Calu3 (cell line): ENCODE measurements at regions of chr13 and their contacts with region 1.

Region 1: DNA sequence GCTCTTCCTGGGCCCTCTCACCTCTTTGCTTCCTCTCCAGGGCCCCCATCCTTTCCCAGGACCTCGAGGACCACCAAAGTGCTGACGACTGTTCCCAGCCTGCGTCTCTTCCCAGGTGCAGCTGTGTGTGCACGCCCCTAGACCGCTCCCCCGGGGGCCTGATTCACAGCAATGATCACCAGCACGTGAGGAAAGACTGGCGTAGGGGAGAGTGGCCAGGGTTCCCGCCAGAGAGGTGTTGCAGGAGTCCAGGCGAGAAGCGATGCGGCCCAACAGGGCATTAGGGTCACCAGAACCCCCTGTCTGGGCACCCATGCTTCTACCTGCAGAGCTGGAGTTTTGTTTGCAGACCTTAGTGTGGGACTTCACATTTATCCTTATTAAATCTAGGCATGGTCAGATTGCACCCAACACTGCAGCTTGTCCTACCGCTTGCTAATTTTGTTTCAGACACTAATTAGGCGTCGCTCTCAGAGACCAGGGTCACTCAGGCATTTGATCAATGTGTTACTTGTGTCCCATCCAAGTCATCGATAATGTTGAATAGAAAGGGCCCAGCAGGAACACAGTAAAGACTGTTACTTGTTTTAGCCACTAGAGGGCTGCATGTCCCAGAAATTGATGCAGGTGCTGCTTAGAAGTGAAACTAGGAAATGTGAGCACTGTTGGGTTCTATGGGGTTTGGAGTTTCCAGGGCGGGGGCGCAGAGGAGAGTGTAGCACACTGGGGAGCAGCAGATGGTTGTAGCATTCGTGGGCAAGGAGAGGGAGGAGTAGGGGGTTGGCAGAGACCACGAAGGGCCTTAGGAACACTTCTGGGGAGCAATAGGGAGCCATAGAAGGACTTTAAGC is 53.2 kb downstream of the CDADC1 start:
- DNase-seq: peak; percentile 41
- H3K4me3 Mint-ChIP-seq: no peak overlapping the region
- H3K27ac Mint-ChIP-seq: peak overlapping the region; percentile 64
- H3K4me1 Mint-ChIP-seq: peaks cover 43% of the 10 kb centered on the region
- H3K27me3 Mint-ChIP-seq: no peaks in the 10 kb centered on the region
- CTCF ChIP-seq: peak; percentile 45

Region 2: GRCh38 chr13:49436890-49437289 is 135.9 kb after region 1 on chr13:
- CTCF ChIA-PET with region 1: no interaction called
- intact Hi-C with region 1: loop called (anchors 1 kb)
- DNase-seq: peak; percentile 1
- H3K4me3 Mint-ChIP-seq: no peak overlapping the region
- H3K27ac Mint-ChIP-seq: no peak overlapping the region
- H3K4me1 Mint-ChIP-seq: no peaks in the 10 kb centered on the region
- H3K27me3 Mint-ChIP-seq: no peaks in the 10 kb centered on the region
- CTCF ChIP-seq: no peak

Region 3: DNA sequence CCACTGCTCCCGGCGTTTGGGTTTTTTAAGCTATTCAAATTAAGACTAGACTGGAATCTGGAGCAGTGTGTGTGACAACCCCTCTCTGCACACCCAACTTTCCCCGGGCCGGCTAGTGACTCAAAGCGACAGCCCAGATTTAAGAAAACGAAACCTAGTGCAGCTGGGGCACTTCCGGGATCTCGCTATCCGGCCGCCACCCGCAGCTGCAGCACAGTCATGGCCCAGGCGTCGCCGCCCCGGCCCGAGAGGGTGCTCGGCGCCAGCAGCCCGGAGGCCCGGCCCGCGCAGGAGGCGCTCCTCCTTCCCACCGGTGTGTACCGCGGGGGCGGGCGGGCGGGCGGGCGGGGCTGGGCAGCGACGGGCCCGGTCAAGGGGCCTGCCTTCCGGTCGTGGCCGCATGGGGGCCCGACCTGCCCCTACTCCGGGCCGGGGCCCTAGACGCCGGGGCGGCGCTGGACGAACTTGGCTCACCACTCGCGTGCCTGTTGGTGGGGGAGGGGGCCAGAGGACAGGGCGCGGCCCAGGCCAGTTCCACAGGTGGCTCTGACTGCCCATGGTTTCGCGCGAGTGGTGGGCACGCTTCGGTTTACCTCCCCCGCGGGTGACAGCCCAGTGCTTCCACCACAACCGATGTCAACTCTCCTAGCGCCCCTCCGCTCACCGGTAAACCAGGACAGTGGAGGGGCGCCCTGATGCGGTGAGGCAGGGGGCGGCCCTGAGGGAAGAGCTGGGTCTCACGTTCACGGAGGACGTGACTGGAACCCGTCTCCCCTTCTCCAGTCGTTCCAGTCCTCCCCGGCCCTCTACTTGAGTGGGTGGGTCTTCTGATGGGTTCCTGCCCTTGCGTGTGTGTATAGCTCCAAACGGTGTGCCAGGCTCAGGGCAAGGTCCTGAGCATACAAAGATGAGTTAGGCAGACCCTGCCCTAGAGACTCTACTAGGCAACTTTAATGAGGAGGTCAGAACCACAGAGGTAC is 195.1 kb after region 1 on chr13 and contains the start of gene PHF11:
- CTCF ChIA-PET with region 1: no interaction called
- intact Hi-C with region 1: loop called (anchors 2 kb)
- DNase-seq: peak; percentile 68
- H3K4me3 Mint-ChIP-seq: peak within 1 kb of the TSS; percentile 76
- H3K27ac Mint-ChIP-seq: peak within 1 kb of the TSS; percentile 74
- H3K4me1 Mint-ChIP-seq: peaks cover 12% of the 10 kb centered on the region
- H3K27me3 Mint-ChIP-seq: no peaks in the 10 kb centered on the region
- CTCF ChIP-seq: peak; percentile 12
- total RNA-seq, gene PHF11: 24.0 and 28.8 TPM in 2 replicates

Region 4: DNA sequence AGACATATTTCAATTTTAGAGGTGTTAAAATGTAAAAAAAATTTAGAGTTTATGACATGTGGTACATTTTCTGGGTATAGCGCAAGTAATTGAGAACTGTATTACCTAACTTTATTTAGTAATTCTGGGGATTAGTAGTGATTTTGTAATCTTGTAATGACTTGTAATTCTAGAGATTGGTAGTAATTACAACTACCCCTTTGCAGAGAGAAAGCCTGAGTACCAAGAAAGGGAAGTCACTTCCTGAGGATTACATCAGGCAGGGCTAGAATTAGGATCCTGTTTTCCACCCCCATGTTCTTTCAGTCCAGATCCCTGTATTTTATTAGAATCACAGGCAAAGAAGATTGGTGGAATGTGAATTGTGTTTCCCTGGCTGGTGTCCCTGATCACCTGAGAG is 989.2 kb after region 1 on chr13:
- CTCF ChIA-PET with region 1: no interaction called
- intact Hi-C with region 1: no loop called
- DNase-seq: no peak
- H3K4me3 Mint-ChIP-seq: no peak overlapping the region
- H3K27ac Mint-ChIP-seq: no peak overlapping the region
- H3K4me1 Mint-ChIP-seq: no peaks in the 10 kb centered on the region
- H3K27me3 Mint-ChIP-seq: no peaks in the 10 kb centered on the region
- CTCF ChIP-seq: no peak